K562 (cell line): ENCODE measurements at regions of chr1 and their contacts with region 1.

Region 1: DNA sequence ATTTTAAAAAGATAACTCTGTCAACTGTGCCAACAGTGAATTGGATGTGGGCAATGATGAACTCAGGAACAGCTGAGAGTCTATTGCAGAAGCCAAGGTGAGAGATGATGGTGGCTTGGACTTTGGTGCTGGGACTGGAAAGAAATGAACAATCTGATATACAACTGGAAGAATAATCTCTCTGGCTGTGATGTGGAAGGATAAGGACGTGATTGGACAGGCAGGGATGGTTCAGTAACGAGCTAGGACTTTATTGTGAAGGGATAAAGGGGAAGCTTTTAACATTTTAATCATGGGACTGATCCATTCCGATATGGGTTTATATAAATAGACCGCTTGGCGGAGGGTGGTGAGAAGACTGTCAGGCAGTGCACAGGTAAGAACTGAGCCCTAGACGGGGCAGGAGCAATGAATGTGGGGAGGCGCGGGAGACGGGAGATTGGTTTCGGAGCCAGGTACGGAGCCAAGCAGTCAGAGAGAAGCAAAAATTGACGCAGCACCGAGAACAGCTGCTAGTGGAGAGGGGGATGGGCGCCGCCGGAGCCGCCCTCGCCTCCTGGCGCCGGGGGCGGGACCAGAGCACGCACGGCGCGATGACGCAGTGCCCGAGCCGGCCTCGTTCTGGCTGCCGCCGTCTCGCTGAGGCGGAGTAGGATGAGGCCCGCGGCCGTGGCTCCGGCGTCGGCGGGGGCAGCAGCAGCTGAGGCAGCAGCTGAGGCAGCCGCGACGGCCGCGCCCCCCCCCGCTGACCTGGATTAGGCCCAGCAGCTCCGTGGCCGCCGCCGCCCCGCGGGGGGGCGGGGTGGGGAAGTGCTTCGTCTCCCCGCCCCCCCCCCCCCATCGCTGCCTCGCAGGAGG is at the start of gene RNF11:
- DNase-seq: peak; percentile 95 to 96 (median 96)
- ATAC-seq: peak; percentile 93
- H3K4me3 ChIP-seq: peak within 1 kb of the TSS; percentile 94
- H3K27ac ChIP-seq: peak within 1 kb of the TSS; percentile 89
- H3K4me1 ChIP-seq: peaks cover 19 to 21% of the 10 kb centered on the region in 2 experiments
- H3K27me3 ChIP-seq: no peaks in the 10 kb centered on the region
- CTCF ChIP-seq: no peak
- EP300 ChIP-seq: peak; percentile 56
- POLR2A ChIP-seq: peak; percentile 71
- RAD21 ChIP-seq: no peak; a peak in 1 of 4 replicates
- polyA plus RNA-seq, gene RNF11: 5.7 to 6.1 TPM

Region 2: DNA sequence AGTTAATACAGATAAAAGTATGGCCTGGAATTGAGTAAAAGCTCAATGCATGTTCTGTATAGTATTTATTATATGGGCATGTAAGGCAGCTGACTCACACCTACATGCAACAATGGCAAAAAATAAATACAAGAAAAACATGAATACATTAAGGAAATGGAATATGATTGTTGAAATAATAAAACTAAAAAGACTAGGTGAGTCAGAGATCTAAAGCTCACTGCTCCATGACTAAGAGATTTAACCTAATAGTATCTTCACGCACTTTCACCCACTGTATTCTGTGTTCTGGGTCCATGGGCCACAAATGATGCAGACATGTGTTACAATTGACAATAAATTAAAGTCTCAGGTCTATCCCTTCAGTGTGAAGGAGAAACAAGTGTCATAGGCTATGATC is 1819.1 kb before region 1 on chr1:
- CTCF ChIA-PET with region 1: no interaction called
- POLR2A ChIA-PET with region 1: no interaction called
- in situ Hi-C with region 1: no loop called
- intact Hi-C with region 1: no loop called
- DNase-seq: no peak
- ATAC-seq: no peak
- H3K4me3 ChIP-seq: no peak overlapping the region
- H3K27ac ChIP-seq: no peak overlapping the region
- H3K4me1 ChIP-seq: no peaks in the 10 kb centered on the region
- H3K27me3 ChIP-seq: no peaks in the 10 kb centered on the region
- CTCF ChIP-seq: no peak
- EP300 ChIP-seq: no peak
- POLR2A ChIP-seq: no peak
- RAD21 ChIP-seq: no peak

Region 3: DNA sequence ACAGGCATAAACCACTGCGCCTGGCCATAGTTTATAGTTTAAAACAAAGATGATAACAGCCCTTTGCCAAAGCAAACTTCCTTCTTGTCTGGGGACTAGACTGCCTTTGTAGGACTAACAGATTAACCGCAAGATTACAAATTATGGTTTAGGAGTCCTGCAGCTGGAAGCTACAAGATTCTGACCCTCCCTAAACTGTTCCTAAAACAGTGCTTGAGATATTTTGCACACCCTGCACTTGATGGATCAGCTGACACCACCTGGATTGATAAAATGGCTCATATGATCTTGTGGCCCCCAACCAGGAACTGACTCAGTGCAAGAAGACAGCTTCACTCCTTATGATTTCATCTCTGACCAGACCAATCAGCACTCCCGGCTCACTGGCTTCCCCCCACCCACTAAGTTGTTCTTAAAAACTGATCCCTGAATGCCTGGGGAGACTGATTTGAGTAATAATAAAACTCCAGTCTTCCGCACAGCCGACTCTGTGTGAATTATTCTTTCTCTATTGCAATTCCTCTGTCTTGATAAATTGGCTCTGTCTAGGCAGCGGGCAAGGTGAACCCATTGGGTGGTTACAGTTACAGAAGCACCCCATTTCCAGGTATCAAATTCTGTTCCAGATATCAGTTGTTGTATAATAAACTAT is 13.6 kb before region 1 on chr1:
- CTCF ChIA-PET with region 1: no interaction called
- POLR2A ChIA-PET with region 1: interaction called, 21 read pairs
- in situ Hi-C with region 1: no loop called
- intact Hi-C with region 1: no loop called
- DNase-seq: peak in 1 of 4 experiments; percentile 69
- ATAC-seq: peak; percentile 42
- H3K4me3 ChIP-seq: no peak overlapping the region
- H3K27ac ChIP-seq: no peak overlapping the region
- H3K4me1 ChIP-seq: no peaks in the 10 kb centered on the region; a peak in 2 of 5 replicates
- H3K27me3 ChIP-seq: no peaks in the 10 kb centered on the region
- CTCF ChIP-seq: no peak
- EP300 ChIP-seq: peak; percentile 54; the same call in 1 of the 2 replicates
- POLR2A ChIP-seq: no peak
- RAD21 ChIP-seq: no peak

Region 4: DNA sequence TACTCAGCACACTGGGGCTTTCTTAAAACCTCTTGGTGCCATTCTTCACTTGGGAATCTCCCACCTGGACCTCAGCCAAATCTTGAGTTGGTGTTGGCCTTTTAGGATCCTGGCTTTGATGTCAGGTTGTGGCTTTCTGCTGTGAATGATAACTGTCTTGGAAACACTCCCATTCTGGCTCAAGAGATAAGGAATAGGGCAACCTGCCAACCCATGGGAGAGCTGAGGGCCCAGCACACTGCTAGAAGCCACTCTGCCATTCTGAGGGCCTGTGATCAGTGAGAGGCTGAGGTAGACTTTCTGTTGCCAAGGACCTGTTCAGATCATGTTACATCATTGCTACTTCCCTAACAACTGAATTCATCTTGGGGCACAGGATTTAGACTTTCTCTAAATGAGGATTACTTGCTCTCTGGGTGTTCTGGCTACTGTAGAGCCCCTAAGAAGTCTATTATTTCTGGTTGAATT is 48.6 kb after region 1 on chr1:
- CTCF ChIA-PET with region 1: no interaction called
- POLR2A ChIA-PET with region 1: interaction called, 3 read pairs
- in situ Hi-C with region 1: no loop called
- intact Hi-C with region 1: loop called (anchors 2 kb)
- DNase-seq: peak; percentile 92 to 99 (median 94)
- ATAC-seq: peak; percentile 93
- H3K4me3 ChIP-seq: no peak overlapping the region
- H3K27ac ChIP-seq: no peak overlapping the region
- H3K4me1 ChIP-seq: peaks cover 23 to 30% of the 10 kb centered on the region in 2 experiments; a peak in 4 of 5 replicates
- H3K27me3 ChIP-seq: no peaks in the 10 kb centered on the region
- CTCF ChIP-seq: peak in 1 of 3 experiments; percentile 11; a peak in 1 of 6 replicates
- EP300 ChIP-seq: peak; percentile 98
- POLR2A ChIP-seq: no peak
- RAD21 ChIP-seq: peak in 1 of 2 experiments; percentile 28; a peak in 2 of 4 replicates

Region 5: DNA sequence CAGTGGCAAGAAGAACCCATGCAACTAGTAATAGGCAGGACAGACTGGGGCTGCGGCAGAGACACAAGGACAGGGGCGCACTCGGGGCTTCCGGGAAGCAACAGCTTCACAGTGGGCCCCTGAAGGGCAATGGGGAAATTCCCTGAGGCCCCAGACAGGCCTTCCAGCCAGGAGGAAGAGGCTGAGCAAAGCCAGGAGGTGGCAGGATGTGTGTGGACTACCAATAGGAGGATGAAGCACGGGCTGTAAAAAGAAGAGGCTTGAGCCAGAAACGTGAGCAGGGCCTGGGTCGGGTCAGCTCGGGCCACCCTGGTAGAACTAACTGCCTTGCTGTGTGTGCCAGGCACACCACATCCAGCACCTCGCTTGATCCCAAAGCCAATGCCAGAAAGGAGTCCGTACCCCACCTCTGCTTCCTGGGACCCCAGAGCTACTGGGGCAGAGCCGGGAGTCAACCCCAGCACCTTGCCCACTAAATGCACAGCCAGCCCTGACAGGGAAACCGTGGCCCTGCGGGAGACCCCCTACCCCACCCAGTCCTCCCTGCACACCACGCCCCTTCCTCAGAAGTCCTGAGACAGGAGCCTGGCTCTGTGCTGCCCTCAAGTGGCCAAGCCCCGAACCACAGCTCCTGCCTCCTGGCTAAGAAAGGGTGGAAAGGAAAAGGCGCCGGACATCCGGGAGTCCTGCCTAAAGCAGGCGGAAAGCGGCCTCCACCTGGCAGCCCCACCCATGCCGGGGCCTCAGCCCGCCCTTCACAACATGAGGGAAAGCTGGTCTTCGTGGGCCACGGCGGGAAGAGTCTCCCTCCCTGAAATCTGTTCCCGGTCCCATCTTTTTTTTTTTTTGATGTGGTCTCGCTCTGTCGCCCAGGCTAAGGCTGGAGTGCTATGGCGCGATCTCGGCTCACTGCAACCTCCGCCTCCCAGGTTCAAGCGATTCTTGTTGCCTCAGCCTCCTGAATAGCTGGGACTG is 60.8 kb after region 1 on chr1:
- CTCF ChIA-PET with region 1: no interaction called
- POLR2A ChIA-PET with region 1: no interaction called
- in situ Hi-C with region 1: no loop called
- intact Hi-C with region 1: loop called (anchors 5 kb)
- DNase-seq: peak; percentile 90 to 94 (median 91)
- ATAC-seq: peak; percentile 92
- H3K4me3 ChIP-seq: no peak overlapping the region
- H3K27ac ChIP-seq: no peak overlapping the region; the same call in 2 of the 3 replicates
- H3K4me1 ChIP-seq: peaks cover 12 to 44% of the 10 kb centered on the region in 2 experiments; a peak in 4 of 5 replicates
- H3K27me3 ChIP-seq: no peaks in the 10 kb centered on the region
- CTCF ChIP-seq: peak; percentile 94 to 99 (median 96)
- EP300 ChIP-seq: no peak
- POLR2A ChIP-seq: no peak
- RAD21 ChIP-seq: peak; percentile 90 to 94

Region 6: DNA sequence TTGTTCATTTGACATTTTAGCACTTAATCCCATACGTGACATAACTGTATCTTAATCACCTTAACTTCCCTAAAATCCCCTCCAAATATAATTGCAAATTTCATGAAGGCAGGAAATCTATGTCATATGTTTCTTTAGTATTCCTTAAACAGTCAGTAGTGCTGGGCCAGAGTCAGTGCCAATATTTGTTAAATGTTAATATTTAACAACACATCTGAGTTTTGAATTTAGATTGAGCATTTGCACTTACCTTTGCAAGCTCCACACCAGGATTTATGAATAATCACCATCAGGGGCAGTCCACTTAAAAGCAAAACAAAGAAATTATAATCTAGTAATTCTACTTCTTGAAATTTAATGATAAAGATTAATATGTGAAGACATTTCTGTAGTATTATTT is 792.4 kb after region 1 on chr1:
- CTCF ChIA-PET with region 1: no interaction called
- POLR2A ChIA-PET with region 1: no interaction called
- in situ Hi-C with region 1: no loop called
- intact Hi-C with region 1: no loop called
- DNase-seq: no peak
- ATAC-seq: no peak
- H3K4me3 ChIP-seq: no peak overlapping the region
- H3K27ac ChIP-seq: no peak overlapping the region
- H3K4me1 ChIP-seq: peaks cover 12 to 14% of the 10 kb centered on the region in 2 experiments; a peak in 4 of 5 replicates
- H3K27me3 ChIP-seq: no peaks in the 10 kb centered on the region
- CTCF ChIP-seq: no peak
- EP300 ChIP-seq: no peak
- POLR2A ChIP-seq: no peak
- RAD21 ChIP-seq: no peak